ENCODE measurements at regions of chr19 and their contacts with region 1.

Region 1: GRCh38 chr19:58362272-58362994 is at the start of gene ZNF497:
- DNase-seq: peak; percentile 96 to 97
- H3K4me3 ChIP-seq: peak within 1 kb of the TSS; percentile 78
- H3K4me3 Mint-ChIP-seq: peak within 1 kb of the TSS; percentile 95
- H3K27ac Mint-ChIP-seq: peak within 1 kb of the TSS; percentile 98
- H3K4me1 ChIP-seq: peaks cover 5% of the 10 kb centered on the region; the same call in 1 of the 2 replicates
- H3K4me1 Mint-ChIP-seq: no peaks in the 10 kb centered on the region
- H3K27me3 ChIP-seq: no peaks in the 10 kb centered on the region
- H3K27me3 Mint-ChIP-seq: no peaks in the 10 kb centered on the region
- CTCF ChIP-seq: no peak
- total RNA-seq, gene ZNF497: 1.6 and 1.7 TPM in 2 replicates

Region 2: GRCh38 chr19:58380722-58381466 is 18.5 kb after region 1 on chr19 and contains the start of gene ZNF837:
- CTCF ChIA-PET with region 1: interaction called, 4 read pairs
- POLR2A ChIA-PET with region 1: interaction called, 6 read pairs
- intact Hi-C with region 1: loop called (anchors 1 kb)
- DNase-seq: peak; percentile 99 to 100
- H3K4me3 ChIP-seq: peak within 1 kb of the TSS; percentile 68
- H3K4me3 Mint-ChIP-seq: peak within 1 kb of the TSS; percentile 87
- H3K27ac Mint-ChIP-seq: peak within 1 kb of the TSS; percentile 85
- H3K4me1 ChIP-seq: peaks cover 18% of the 10 kb centered on the region
- H3K4me1 Mint-ChIP-seq: peaks cover 12% of the 10 kb centered on the region
- H3K27me3 ChIP-seq: no peaks in the 10 kb centered on the region
- H3K27me3 Mint-ChIP-seq: no peaks in the 10 kb centered on the region
- CTCF ChIP-seq: no peak
- total RNA-seq, gene ZNF837: 2.2 and 2.3 TPM in 2 replicates

Region 3: GRCh38 chr19:58400916-58401839 is 38.7 kb after region 1 on chr19:
- CTCF ChIA-PET with region 1: no interaction called
- POLR2A ChIA-PET with region 1: no interaction called
- intact Hi-C with region 1: loop called (anchors 2 kb)
- DNase-seq: peak; percentile 99
- H3K4me3 ChIP-seq: peak overlapping the region; percentile 93
- H3K4me3 Mint-ChIP-seq: peak overlapping the region; percentile 99
- H3K27ac Mint-ChIP-seq: peak overlapping the region; percentile 99
- H3K4me1 ChIP-seq: peaks cover 8% of the 10 kb centered on the region
- H3K4me1 Mint-ChIP-seq: peaks cover 11% of the 10 kb centered on the region
- H3K27me3 ChIP-seq: no peaks in the 10 kb centered on the region
- H3K27me3 Mint-ChIP-seq: no peaks in the 10 kb centered on the region
- CTCF ChIP-seq: no peak

Region 4: DNA sequence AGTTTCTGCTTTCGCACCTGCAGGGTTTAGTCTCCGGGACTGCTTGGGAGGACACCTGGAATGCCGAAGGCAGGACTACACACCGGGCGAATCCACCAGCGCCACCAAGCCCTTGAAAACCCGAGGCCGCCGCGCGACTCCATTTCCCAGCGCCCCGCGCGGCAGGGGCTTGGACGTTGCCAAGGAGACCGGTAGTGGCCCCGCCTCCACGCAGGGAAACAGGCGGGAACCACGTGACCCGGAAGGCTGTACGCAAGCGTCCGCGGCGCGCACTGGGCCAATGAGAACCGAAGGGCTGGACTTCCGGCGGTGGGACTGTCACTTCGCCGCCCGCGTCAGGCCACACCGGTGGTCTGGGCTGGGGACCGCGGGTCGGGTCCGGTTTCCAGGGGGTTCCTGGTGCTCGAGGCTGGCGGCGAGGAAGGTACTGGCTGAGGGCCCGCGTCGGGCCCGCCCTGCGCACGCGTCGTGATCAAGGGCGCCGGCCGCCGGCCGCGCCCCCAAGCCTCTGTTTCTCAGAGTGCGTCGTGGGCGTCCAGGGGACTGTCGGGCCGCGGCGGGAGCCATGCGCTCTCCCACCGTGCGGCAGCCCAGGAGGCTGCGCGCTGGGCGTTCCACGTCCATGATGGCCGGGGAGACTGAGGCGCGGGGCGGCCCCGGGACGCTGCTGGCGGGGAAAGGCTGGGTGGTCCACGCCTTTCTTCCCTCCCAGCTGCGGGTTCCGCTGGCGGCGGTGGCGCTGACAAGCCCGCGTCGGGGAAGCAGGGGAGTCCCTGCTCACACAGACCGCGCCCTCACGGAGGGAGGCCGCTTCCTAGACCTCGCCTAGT is 104.5 kb after region 1 on chr19 and contains the start of gene ZNF324:
- CTCF ChIA-PET with region 1: no interaction called
- POLR2A ChIA-PET with region 1: no interaction called
- intact Hi-C with region 1: no loop called
- DNase-seq: peak; percentile 98 to 99
- H3K4me3 ChIP-seq: peak within 1 kb of the TSS; percentile 97
- H3K4me3 Mint-ChIP-seq: peak within 1 kb of the TSS; percentile 81
- H3K27ac Mint-ChIP-seq: peak within 1 kb of the TSS; percentile 60
- H3K4me1 ChIP-seq: no peaks in the 10 kb centered on the region
- H3K4me1 Mint-ChIP-seq: peaks cover 11% of the 10 kb centered on the region
- H3K27me3 ChIP-seq: no peaks in the 10 kb centered on the region
- H3K27me3 Mint-ChIP-seq: no peaks in the 10 kb centered on the region
- CTCF ChIP-seq: peak in 1 of 2 experiments; percentile 2
- total RNA-seq, gene ZNF324: 9.8 and 10.6 TPM in 2 replicates